ENCODE measurements at regions of chr20 and their contacts with region 1.

Region 1: DNA sequence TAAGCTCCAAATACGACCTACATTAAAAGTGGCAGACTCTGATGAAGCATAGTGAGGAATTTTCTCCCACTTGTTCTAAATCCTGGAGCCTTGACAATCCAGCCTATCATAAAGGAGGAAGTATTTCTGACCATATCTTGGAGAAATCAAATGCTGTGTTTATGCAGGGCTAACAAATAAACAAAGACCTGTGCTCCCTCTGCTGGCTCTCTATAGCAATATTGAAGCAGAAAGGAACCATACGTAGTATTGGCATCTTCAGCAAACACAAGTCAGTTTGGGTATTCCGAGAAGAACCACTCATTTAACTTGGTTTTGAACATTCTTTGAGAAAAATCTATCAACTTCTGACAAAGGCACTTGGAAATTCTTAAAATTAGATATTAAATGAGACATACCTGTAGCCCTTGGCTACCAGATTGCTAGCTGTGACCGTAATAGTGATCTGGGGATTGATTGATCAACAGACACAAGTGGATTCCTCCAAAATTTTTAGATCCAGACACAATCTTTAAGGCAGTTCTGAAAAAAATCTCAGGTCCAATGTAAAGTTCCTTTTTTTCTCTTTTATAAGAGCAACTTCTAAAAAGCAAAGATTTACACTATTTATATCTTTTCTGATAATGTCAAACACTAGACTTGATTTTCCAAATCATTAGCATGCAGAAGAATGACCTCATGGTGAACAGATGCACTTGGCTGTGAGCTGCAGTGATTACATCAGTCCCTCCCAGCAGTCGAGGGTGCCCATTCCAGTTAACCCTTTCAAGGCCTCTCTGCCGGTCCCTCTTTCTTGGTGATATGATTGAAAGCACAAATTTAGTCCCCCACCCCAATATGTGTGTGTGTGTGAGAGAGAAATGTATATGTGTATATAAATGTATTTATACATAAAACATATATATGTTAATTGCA is 40.2 kb downstream of the INSM1 start:
- DNase-seq: no peak
- H3K4me3 ChIP-seq: no peak overlapping the region
- H3K27ac ChIP-seq: no peak overlapping the region
- H3K4me1 ChIP-seq: no peaks in the 10 kb centered on the region
- H3K27me3 ChIP-seq: no peaks in the 10 kb centered on the region
- CTCF ChIP-seq: peak in 1 of 2 donors; percentile 31

Region 2: DNA sequence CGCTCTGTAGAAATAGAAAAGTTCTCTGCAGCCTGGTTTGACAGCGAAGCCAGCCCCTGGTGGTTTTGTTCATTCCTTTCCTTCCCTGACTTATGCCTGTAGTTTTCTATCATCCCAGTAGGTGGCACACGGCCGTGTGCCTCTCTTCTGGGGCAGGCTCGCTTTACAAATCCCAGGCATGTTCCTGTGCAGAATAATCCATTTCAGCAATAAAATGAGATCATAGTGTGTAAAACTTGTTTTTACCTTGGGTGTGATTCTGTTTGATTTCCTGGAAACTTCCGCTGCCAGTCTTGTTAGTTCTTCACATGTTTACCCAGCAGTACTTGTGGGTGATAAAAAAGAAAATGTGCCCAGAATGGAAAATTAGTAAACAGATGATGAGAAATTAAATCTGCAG is 47.7 kb before region 1 on chr20:
- CTCF ChIA-PET with region 1: no interaction called
- dilution Hi-C with region 1: no loop called
- in situ Hi-C with region 1: no loop called
- intact Hi-C with region 1: loop called (anchors 5 kb)
- DNase-seq: peak; percentile 60
- H3K4me3 ChIP-seq: no peak overlapping the region
- H3K27ac ChIP-seq: no peak overlapping the region
- H3K4me1 ChIP-seq: no peaks in the 10 kb centered on the region
- H3K27me3 ChIP-seq: peaks cover 37% of the 10 kb centered on the region
- CTCF ChIP-seq: peak; percentile 76 to 87

Region 3: GRCh38 chr20:20466341-20466879 is 58.3 kb after region 1 on chr20:
- CTCF ChIA-PET with region 1: no interaction called
- dilution Hi-C with region 1: loop called (anchors 10 kb)
- in situ Hi-C with region 1: no loop called
- intact Hi-C with region 1: no loop called
- DNase-seq: peak; percentile 28
- H3K4me3 ChIP-seq: no peak overlapping the region
- H3K27ac ChIP-seq: no peak overlapping the region
- H3K4me1 ChIP-seq: no peaks in the 10 kb centered on the region
- H3K27me3 ChIP-seq: no peaks in the 10 kb centered on the region
- CTCF ChIP-seq: no peak

Measured in mammary epithelial cell (primary cell).